Heart left ventricle (tissue), 16 donors: ENCODE measurements at regions of chr6 and their contacts with region 1.

Region 1: GRCh38 chr6:21808045-21808470 is 214.5 kb downstream of the SOX4 start:
- DNase-seq: peak in 4 of 5 donors; percentile 21 to 49 (median 32)
- ATAC-seq: peak; percentile 56 to 88 (median 66)
- H3K4me3 ChIP-seq: peak overlapping the region in 2 of 12 donors; percentile 3 to 10
- H3K27ac ChIP-seq: peak overlapping the region in 11 of 12 donors; percentile 8 to 78 (median 59)
- H3K4me1 ChIP-seq: peaks cover 0 to 26% (median 12%) of the 10 kb centered on the region in 12 donors
- H3K27me3 ChIP-seq: no peaks in the 10 kb centered on the region
- CTCF ChIP-seq: no peak
- POLR2A ChIP-seq: no peak

Region 2: DNA sequence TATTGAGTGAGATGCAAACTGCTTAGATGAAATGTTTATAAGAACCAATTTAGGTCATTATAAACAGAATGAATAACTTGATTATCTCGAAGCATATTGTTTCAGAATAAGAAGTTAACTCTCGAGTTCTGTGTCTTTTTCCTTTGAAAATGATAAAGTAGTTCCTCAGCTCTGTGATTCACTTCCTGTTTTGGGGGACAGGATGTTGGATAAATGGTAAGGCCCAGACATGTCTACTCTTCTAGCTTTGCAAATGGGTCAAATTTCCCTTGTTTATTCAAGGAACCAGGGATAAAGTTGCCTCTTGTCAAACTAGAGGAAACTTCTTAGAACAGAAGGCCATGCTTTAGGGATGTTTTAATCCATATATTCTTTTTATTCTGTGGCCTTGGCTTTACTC is 32.4 kb after region 1 on chr6:
- intact Hi-C with region 1: loop called in 1 of 10 experiments (anchors 5 kb)
- DNase-seq: no peak
- ATAC-seq: no peak
- H3K4me3 ChIP-seq: no peak overlapping the region
- H3K27ac ChIP-seq: peak overlapping the region in 1 of 12 donors; percentile 30
- H3K4me1 ChIP-seq: peaks cover 0 to 27% (median 19%) of the 10 kb centered on the region in 12 donors
- H3K27me3 ChIP-seq: no peaks in the 10 kb centered on the region
- CTCF ChIP-seq: no peak
- POLR2A ChIP-seq: no peak